Gastrocnemius medialis (tissue), 4 donors: ENCODE measurements at regions of chr6 and their contacts with region 1.

Region 1: GRCh38 chr6:73515204-73515655 is 5.6 kb downstream of the EEF1A1 start:
- DNase-seq: no peak
- ATAC-seq: no peak
- H3K4me3 ChIP-seq: no peak overlapping the region
- H3K27ac ChIP-seq: no peak overlapping the region
- H3K4me1 ChIP-seq: peaks cover 7 to 9% of the 10 kb centered on the region in 2 donors
- H3K27me3 ChIP-seq: peaks cover 3 to 12% (median 12%) of the 10 kb centered on the region in 3 donors
- CTCF ChIP-seq: no peak
- POLR2A ChIP-seq: no peak

Region 2: DNA sequence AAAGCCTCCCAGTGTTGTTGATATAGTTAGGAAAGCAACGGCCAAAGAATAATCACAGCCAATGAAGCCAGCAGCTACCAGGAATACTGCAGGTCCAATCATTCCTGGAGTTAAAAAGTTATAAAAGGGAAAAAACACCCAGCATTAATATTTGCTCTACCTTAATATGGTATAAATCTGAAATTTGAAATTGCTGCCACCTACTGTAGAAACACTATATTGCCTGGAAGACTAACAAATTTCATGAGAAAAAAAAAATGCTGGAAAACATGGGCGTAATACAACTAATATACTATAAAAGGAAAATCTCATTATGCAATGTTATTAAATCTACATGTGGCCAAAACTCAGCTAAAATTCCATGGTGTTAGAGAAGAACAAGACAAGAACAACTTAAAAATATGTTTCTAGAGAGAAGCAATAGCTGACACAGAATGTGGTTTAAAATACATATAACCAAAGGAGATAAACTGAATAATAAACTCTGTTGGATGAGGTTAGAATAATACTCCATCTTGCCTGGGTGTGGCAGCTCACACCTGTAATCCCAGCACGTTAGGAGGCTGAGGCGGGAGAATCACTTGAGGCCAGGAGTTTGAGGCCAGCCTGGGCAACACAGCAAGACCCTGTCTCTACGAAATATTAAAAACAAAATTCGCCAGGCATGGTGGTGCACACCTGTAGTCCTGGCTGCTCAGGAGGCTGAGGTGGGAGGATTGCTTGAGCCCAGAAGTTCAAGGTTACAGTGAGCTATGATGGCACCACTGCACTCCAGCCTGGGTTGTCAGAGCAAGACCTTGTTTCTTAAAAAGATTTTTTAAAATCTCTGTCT is 95.4 kb after region 1 on chr6:
- in situ Hi-C with region 1: loop called in 3 of 4 experiments (anchors 5 to 10 kb)
- intact Hi-C with region 1: loop called (anchors 1 kb)
- DNase-seq: no peak
- ATAC-seq: peak in 1 of 2 donors; percentile 49
- H3K4me3 ChIP-seq: no peak overlapping the region
- H3K27ac ChIP-seq: no peak overlapping the region
- H3K4me1 ChIP-seq: no peaks in the 10 kb centered on the region
- H3K27me3 ChIP-seq: no peaks in the 10 kb centered on the region
- CTCF ChIP-seq: peak in 4 of 5 experiments; percentile 37 to 64 (median 54)
- POLR2A ChIP-seq: no peak